ENCODE measurements at regions of chr15 and their contacts with region 1.

Region 1: GRCh38 chr15:60179786-60180391 is 175.8 kb downstream of the FOXB1 start:
- DNase-seq: peak; percentile 9
- H3K4me3 ChIP-seq: no peak overlapping the region
- CTCF ChIP-seq: peak; percentile 68

Region 2: GRCh38 chr15:59917504-59918157 is 262.3 kb before region 1 on chr15:
- CTCF ChIA-PET with region 1: interaction called, 16 read pairs
- POLR2A ChIA-PET with region 1: no interaction called
- DNase-seq: no peak
- H3K4me3 ChIP-seq: no peak overlapping the region
- CTCF ChIP-seq: peak; percentile 60

Region 3: GRCh38 chr15:60070838-60071493 is 108.9 kb before region 1 on chr15:
- CTCF ChIA-PET with region 1: no interaction called
- POLR2A ChIA-PET with region 1: no interaction called
- DNase-seq: peak; percentile 58
- H3K4me3 ChIP-seq: no peak overlapping the region
- CTCF ChIP-seq: no peak

Region 4: GRCh38 chr15:60160051-60160450 is 19.8 kb before region 1 on chr15:
- CTCF ChIA-PET with region 1: no interaction called
- POLR2A ChIA-PET with region 1: no interaction called
- DNase-seq: no peak
- H3K4me3 ChIP-seq: no peak overlapping the region
- CTCF ChIP-seq: no peak

Region 5: GRCh38 chr15:60191821-60192220 is 11.9 kb after region 1 on chr15:
- CTCF ChIA-PET with region 1: interaction called, 15 read pairs
- POLR2A ChIA-PET with region 1: no interaction called
- DNase-seq: no peak
- H3K4me3 ChIP-seq: no peak overlapping the region
- CTCF ChIP-seq: no peak

Region 6: DNA sequence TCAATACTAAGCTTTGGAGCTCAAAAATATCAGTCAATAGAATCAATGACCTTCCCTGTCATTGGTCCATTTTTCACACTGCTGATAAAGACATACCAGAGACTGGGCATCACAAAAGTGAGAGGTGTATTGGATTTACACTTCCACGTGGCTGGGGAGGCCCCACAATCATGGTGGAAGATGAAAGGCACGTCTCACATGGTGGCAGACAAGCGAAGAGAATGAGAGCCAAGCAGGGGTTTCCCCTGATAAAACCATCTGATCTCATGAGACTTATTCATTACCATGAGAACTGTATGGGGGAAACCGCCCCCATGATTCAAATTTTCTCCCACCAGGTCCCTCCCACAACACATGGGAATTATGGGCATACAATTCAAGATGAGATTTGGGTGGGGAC is 136.0 kb after region 1 on chr15:
- CTCF ChIA-PET with region 1: no interaction called
- POLR2A ChIA-PET with region 1: no interaction called
- DNase-seq: no peak
- H3K4me3 ChIP-seq: no peak overlapping the region
- CTCF ChIP-seq: no peak

Measured in AG04449 (cell line).